ENCODE measurements at regions of chr5 and their contacts with region 1.

Region 1: DNA sequence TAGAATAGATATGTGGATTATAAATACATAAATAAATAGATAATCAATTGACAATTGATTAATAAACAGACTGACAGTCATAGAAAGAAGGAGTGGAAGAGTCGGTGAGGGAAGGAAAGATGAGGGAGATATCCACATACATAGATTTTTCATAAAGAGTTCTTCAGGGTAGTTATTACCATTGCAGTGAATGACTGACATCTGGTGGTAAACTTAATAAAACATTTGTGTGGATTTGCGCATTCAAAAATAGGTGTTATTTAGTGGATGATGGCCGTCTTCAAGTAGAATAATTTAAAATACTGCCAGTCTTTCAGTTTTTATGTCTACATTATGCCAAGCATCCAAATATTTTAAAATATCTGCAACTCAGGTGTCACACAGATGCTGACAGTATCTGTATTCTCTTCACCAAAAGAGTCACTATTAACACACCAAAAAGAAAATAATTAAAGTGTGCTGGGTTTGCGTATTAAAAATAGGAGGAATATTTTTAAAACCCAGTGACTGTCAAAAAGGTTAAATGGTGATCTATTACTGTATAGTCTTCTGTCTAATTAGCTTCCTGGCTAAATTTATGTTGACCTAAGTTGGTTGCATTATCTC is 78.8 kb downstream of the GIN1 start:
- DNase-seq: peak; percentile 65
- ATAC-seq: peak; percentile 54; the same call in 1 of the 2 replicates
- H3K4me3 ChIP-seq: no peak overlapping the region
- H3K27ac ChIP-seq: no peak overlapping the region
- H3K4me1 ChIP-seq: no peaks in the 10 kb centered on the region
- H3K27me3 ChIP-seq: no peaks in the 10 kb centered on the region
- CTCF ChIP-seq: peak; percentile 71
- POLR2A ChIP-seq: no peak
- RAD21 ChIP-seq: peak; percentile 83

Region 2: DNA sequence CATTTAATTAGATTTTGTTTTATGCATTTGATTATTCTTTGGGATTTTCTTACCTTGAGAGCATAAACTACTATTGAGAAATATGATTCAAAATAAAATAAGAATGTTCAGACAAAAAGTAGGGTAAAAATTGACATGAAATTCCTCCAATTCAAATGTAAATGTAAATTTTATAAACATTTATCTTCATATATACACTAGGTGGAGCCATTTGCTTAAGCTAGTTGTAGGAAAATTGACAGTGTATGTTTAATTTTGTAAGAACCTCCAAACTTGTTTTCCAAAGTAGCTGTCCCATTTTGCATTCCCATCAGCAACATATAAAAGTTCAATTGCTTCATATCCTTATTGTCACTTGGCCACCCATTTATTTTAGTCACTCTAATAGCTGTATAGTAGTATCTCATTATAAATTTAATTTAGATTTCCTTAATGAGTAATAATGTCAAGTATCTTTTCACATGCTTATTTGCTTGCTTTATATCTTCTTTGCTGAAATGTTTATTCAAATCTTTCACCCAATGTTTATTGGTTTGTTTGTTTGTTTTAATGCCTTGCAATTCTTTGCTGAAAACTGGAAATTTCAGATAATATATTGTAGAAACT is 504.7 kb before region 1 on chr5:
- CTCF ChIA-PET with region 1: interaction called, 3 read pairs
- POLR2A ChIA-PET with region 1: no interaction called
- dilution Hi-C with region 1: no loop called
- in situ Hi-C with region 1: no loop called
- intact Hi-C with region 1: loop called (anchors 2 kb)
- DNase-seq: peak; percentile 22
- ATAC-seq: no peak
- H3K4me3 ChIP-seq: no peak overlapping the region
- H3K27ac ChIP-seq: no peak overlapping the region
- H3K4me1 ChIP-seq: no peaks in the 10 kb centered on the region
- H3K27me3 ChIP-seq: 0 out of 2 replicates have a peak, but pooled peaks cover 1% of the 10 kb centered on the region
- CTCF ChIP-seq: peak; percentile 45
- POLR2A ChIP-seq: no peak
- RAD21 ChIP-seq: peak; percentile 51

Region 3: GRCh38 chr5:102778478-102778877 is 262.7 kb before region 1 on chr5:
- CTCF ChIA-PET with region 1: no interaction called
- POLR2A ChIA-PET with region 1: no interaction called
- dilution Hi-C with region 1: no loop called
- in situ Hi-C with region 1: loop called (anchors 10 kb)
- intact Hi-C with region 1: loop called (anchors 2 kb)
- DNase-seq: peak; percentile 74
- ATAC-seq: peak; percentile 74
- H3K4me3 ChIP-seq: no peak overlapping the region
- H3K27ac ChIP-seq: no peak overlapping the region
- H3K4me1 ChIP-seq: no peaks in the 10 kb centered on the region; the same call in 1 of the 2 replicates
- H3K27me3 ChIP-seq: no peaks in the 10 kb centered on the region
- CTCF ChIP-seq: no peak
- POLR2A ChIP-seq: no peak
- RAD21 ChIP-seq: no peak

Region 4: DNA sequence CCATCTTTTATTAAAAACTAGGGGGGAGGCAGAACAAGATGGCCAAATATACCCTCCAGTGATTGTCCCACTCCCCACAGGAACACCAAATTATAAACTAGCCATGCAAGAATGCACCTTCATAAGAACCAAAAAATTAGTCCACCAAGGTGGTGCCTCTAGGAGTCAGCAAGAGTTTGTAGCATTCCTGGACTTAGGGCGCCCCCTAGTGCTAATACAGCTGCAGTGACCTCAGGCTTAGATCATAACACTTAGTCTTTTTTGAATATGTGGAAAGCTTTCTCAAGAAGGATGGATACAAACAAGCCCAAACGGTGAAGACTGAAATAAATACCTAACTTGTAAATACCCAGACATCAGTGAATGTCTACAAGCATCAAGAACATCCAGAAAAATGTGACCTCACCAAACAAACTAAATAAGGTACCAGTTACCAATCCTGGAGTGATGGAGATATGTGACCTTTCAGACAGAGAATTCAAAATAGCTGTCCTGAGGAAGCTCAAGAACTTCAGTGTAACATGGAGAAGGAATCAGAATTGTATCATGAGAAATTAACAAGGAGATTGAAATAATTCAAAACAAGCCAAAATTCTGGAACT is 98.2 kb after region 1 on chr5:
- CTCF ChIA-PET with region 1: no interaction called
- POLR2A ChIA-PET with region 1: no interaction called
- dilution Hi-C with region 1: no loop called
- in situ Hi-C with region 1: no loop called
- intact Hi-C with region 1: loop called (anchors 5 kb)
- DNase-seq: peak; percentile 68
- ATAC-seq: peak; percentile 97
- H3K4me3 ChIP-seq: no peak overlapping the region
- H3K27ac ChIP-seq: no peak overlapping the region
- H3K4me1 ChIP-seq: no peaks in the 10 kb centered on the region
- H3K27me3 ChIP-seq: no peaks in the 10 kb centered on the region
- CTCF ChIP-seq: peak; percentile 91
- POLR2A ChIP-seq: no peak
- RAD21 ChIP-seq: peak; percentile 95

Region 5: GRCh38 chr5:103224118-103224893 is 183.1 kb after region 1 on chr5:
- CTCF ChIA-PET with region 1: no interaction called
- POLR2A ChIA-PET with region 1: no interaction called
- dilution Hi-C with region 1: no loop called
- in situ Hi-C with region 1: no loop called
- intact Hi-C with region 1: loop called (anchors 10 kb)
- DNase-seq: peak; percentile 75
- ATAC-seq: peak; percentile 100
- H3K4me3 ChIP-seq: no peak overlapping the region
- H3K27ac ChIP-seq: no peak overlapping the region
- H3K4me1 ChIP-seq: no peaks in the 10 kb centered on the region
- H3K27me3 ChIP-seq: no peaks in the 10 kb centered on the region
- CTCF ChIP-seq: peak; percentile 78
- POLR2A ChIP-seq: no peak
- RAD21 ChIP-seq: peak; percentile 75

Region 6: GRCh38 chr5:103340717-103341388 is 299.7 kb after region 1 on chr5:
- CTCF ChIA-PET with region 1: no interaction called
- POLR2A ChIA-PET with region 1: no interaction called
- dilution Hi-C with region 1: no loop called
- in situ Hi-C with region 1: no loop called
- intact Hi-C with region 1: no loop called
- DNase-seq: peak; percentile 11
- ATAC-seq: no peak
- H3K4me3 ChIP-seq: no peak overlapping the region
- H3K27ac ChIP-seq: no peak overlapping the region
- H3K4me1 ChIP-seq: no peaks in the 10 kb centered on the region
- H3K27me3 ChIP-seq: no peaks in the 10 kb centered on the region
- CTCF ChIP-seq: no peak
- POLR2A ChIP-seq: no peak
- RAD21 ChIP-seq: no peak

Measured in IMR-90 (cell line).